ENCODE measurements at regions of chr19 and their contacts with region 1.

Region 1: DNA sequence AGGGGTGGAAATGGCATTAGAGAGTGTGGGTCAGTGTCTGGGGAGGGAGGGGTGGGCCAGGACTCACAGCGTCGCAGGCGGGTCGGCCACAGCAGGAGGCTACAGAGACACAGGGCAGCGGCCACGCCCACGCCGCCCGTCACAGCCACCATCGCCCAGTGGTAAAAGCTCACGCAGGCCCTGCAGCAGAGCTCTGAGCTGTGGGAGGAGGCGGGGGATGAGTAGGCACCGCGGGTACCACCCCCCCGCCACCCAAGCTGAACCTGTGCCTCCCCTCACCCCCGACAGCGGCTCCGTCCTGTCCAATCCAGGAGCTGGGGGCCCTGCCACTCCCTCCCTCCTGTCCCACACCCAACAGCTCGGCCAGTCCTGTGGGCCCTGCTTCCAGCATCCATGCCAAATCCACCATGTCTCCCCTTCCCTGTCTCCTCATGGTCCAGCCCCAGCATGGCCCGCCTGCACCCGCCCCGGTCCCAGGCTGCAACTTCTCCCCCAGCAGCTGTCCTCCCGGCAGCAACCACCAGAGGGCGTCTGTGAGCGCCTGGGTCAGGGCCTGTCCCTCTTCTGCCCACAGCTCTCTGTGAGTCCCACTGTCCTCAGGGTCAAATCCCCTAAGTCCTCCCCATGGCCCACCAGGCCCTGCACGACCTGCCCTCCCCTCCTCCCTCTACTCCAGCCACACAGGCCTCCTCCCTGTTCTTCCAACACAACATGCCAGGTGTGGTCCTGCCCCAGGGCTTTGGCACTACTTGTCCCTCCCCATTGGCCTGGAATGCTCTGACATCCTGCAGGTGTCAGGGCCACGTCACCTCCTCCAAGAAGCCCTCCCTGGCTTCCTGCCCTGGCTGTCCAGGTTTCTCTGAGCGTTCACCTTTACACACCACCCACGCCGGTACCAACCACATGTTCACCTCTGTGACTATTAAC is 6.0 kb downstream of the TEKTIP1 start:
- DNase-seq: peak; percentile 64 to 88 (median 77)
- ATAC-seq: peak; percentile 74
- H3K4me3 ChIP-seq: no peak overlapping the region
- H3K4me3 Mint-ChIP-seq: no peak overlapping the region
- H3K27ac ChIP-seq: no peak overlapping the region
- H3K27ac Mint-ChIP-seq: peak overlapping the region; percentile 33
- H3K4me1 ChIP-seq: peaks cover 21% of the 10 kb centered on the region
- H3K4me1 Mint-ChIP-seq: peaks cover 11% of the 10 kb centered on the region
- H3K27me3 ChIP-seq: no peaks in the 10 kb centered on the region
- H3K27me3 Mint-ChIP-seq: no peaks in the 10 kb centered on the region
- CTCF ChIP-seq: peak; percentile 94

Region 2: DNA sequence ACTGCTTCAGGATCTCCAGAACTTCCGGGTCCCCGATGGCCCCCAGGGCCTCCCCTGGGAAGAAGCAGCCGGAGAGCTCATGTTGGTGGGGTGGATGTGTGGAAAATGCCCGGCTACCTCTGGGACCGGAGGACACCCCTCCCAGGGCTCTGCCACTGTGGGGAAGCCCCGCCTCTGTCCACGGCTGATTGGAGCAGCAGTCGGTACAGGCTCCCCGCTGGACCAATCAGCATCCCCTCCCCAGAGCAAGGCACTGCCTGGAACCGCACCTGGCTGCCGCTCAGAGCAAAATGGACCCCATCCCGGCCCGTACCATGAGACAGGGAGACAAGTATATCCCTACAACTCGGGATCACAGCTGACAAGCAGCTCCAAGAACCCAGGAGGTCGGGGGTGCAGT is 51.0 kb before region 1 on chr19:
- CTCF ChIA-PET with region 1: no interaction called
- POLR2A ChIA-PET with region 1: no interaction called
- intact Hi-C with region 1: no loop called
- DNase-seq: peak in 5 of 14 experiments; percentile 20 to 62 (median 31)
- ATAC-seq: peak; percentile 78
- H3K4me3 ChIP-seq: no peak overlapping the region
- H3K4me3 Mint-ChIP-seq: no peak overlapping the region
- H3K27ac ChIP-seq: no peak overlapping the region
- H3K27ac Mint-ChIP-seq: no peak overlapping the region
- H3K4me1 ChIP-seq: peaks cover 18% of the 10 kb centered on the region
- H3K4me1 Mint-ChIP-seq: peaks cover 17% of the 10 kb centered on the region
- H3K27me3 ChIP-seq: no peaks in the 10 kb centered on the region
- H3K27me3 Mint-ChIP-seq: no peaks in the 10 kb centered on the region
- CTCF ChIP-seq: no peak

Region 3: GRCh38 chr19:3505598-3506383 is 39.2 kb before region 1 on chr19 and contains the start of gene FZR1:
- CTCF ChIA-PET with region 1: interaction called, 3 read pairs
- POLR2A ChIA-PET with region 1: interaction called, 3 read pairs
- intact Hi-C with region 1: loop called in 1 of 2 experiments (anchors 5 kb)
- DNase-seq: peak; percentile 98 to 100 (median 100)
- ATAC-seq: peak; percentile 85
- H3K4me3 ChIP-seq: peak within 1 kb of the TSS; percentile 91
- H3K4me3 Mint-ChIP-seq: peak within 1 kb of the TSS; percentile 95
- H3K27ac ChIP-seq: peak within 1 kb of the TSS; percentile 85 to 96
- H3K27ac Mint-ChIP-seq: peak within 1 kb of the TSS; percentile 95
- H3K4me1 ChIP-seq: peaks cover 53% of the 10 kb centered on the region
- H3K4me1 Mint-ChIP-seq: peaks cover 48% of the 10 kb centered on the region
- H3K27me3 ChIP-seq: no peaks in the 10 kb centered on the region
- H3K27me3 Mint-ChIP-seq: no peaks in the 10 kb centered on the region
- CTCF ChIP-seq: no peak
- total RNA-seq, gene FZR1: 109 to 116 TPM

Region 4: GRCh38 chr19:3557461-3558248 is 12.7 kb after region 1 on chr19 and contains the start of gene MFSD12:
- CTCF ChIA-PET with region 1: interaction called, 33 read pairs
- POLR2A ChIA-PET with region 1: interaction called, 21 read pairs
- intact Hi-C with region 1: no loop called
- DNase-seq: peak; percentile 87 to 97 (median 94)
- ATAC-seq: peak; percentile 77
- H3K4me3 ChIP-seq: peak within 1 kb of the TSS; percentile 84
- H3K4me3 Mint-ChIP-seq: peak within 1 kb of the TSS; percentile 93
- H3K27ac ChIP-seq: peak within 1 kb of the TSS; percentile 45 to 71
- H3K27ac Mint-ChIP-seq: peak within 1 kb of the TSS; percentile 93
- H3K4me1 ChIP-seq: peaks cover 54% of the 10 kb centered on the region
- H3K4me1 Mint-ChIP-seq: peaks cover 33% of the 10 kb centered on the region
- H3K27me3 ChIP-seq: no peaks in the 10 kb centered on the region
- H3K27me3 Mint-ChIP-seq: no peaks in the 10 kb centered on the region
- CTCF ChIP-seq: no peak
- total RNA-seq, gene MFSD12: 62.5 to 65.0 TPM

Region 5: GRCh38 chr19:3586124-3586626 is 41.2 kb after region 1 on chr19:
- CTCF ChIA-PET with region 1: interaction called, 6 read pairs
- POLR2A ChIA-PET with region 1: no interaction called
- intact Hi-C with region 1: loop called in 1 of 2 experiments (anchors 5 kb)
- DNase-seq: peak in 12 of 14 experiments; percentile 24 to 72 (median 42)
- ATAC-seq: peak; percentile 51
- H3K4me3 ChIP-seq: peak overlapping the region; percentile 54
- H3K4me3 Mint-ChIP-seq: peak overlapping the region; percentile 60
- H3K27ac ChIP-seq: no peak overlapping the region
- H3K27ac Mint-ChIP-seq: no peak overlapping the region
- H3K4me1 ChIP-seq: peaks cover 11% of the 10 kb centered on the region
- H3K4me1 Mint-ChIP-seq: no peaks in the 10 kb centered on the region
- H3K27me3 ChIP-seq: no peaks in the 10 kb centered on the region
- H3K27me3 Mint-ChIP-seq: no peaks in the 10 kb centered on the region
- CTCF ChIP-seq: peak; percentile 79

Region 6: GRCh38 chr19:3606690-3607289 is 61.8 kb after region 1 on chr19 and contains the start of gene TBXA2R:
- CTCF ChIA-PET with region 1: no interaction called
- POLR2A ChIA-PET with region 1: no interaction called
- intact Hi-C with region 1: loop called in 1 of 2 experiments (anchors 1 kb)
- DNase-seq: peak in 12 of 14 experiments; percentile 28 to 72 (median 47)
- ATAC-seq: peak; percentile 31
- H3K4me3 ChIP-seq: peak within 1 kb of the TSS; percentile 49
- H3K4me3 Mint-ChIP-seq: peak within 1 kb of the TSS; percentile 73
- H3K27ac ChIP-seq: no peak within 1 kb of the TSS
- H3K27ac Mint-ChIP-seq: no peak within 1 kb of the TSS
- H3K4me1 ChIP-seq: peaks cover 40% of the 10 kb centered on the region
- H3K4me1 Mint-ChIP-seq: peaks cover 14% of the 10 kb centered on the region
- H3K27me3 ChIP-seq: peaks cover 0 to 3% of the 10 kb centered on the region in 2 experiments
- H3K27me3 Mint-ChIP-seq: no peaks in the 10 kb centered on the region
- CTCF ChIP-seq: no peak
- total RNA-seq, gene TBXA2R: 0.47 to 0.75 TPM

Region 7: DNA sequence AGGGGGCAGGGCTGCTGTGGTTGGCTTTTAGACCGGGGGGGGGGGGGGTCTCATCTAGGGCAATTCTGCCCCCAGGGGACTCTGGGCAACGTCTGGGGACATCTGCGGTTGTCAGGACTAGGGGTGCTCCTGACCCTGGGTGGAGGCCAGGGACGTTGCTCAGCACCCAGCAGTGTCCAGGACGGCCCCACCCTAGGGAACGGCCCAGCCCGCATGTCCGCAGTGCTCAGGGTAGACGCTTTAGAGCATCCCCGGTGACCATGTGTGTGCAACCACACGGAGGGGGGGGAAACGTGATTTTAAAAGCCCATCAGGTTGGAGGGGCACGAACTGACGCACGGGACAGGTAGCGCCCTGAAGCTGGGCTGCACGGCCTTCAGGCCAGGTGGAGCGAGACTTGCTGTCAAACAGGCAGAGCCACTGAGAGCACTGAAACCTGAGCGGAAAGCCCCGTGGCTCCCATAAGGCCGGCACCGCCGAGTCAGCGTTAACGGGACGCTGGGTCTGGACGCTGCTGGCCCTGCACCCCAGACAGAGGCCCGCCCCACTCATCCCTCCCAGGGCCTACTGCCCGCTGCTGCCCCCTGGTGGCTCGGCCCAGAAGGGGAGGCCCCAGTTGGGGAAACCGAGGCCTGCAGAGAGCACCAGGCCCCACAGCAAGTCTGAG is 73.3 kb after region 1 on chr19:
- CTCF ChIA-PET with region 1: interaction called, 3 read pairs
- POLR2A ChIA-PET with region 1: no interaction called
- intact Hi-C with region 1: loop called (anchors 1 to 2 kb)
- DNase-seq: peak in 13 of 14 experiments; percentile 25 to 69 (median 44)
- ATAC-seq: peak; percentile 50
- H3K4me3 ChIP-seq: no peak overlapping the region
- H3K4me3 Mint-ChIP-seq: no peak overlapping the region
- H3K27ac ChIP-seq: no peak overlapping the region
- H3K27ac Mint-ChIP-seq: no peak overlapping the region
- H3K4me1 ChIP-seq: peaks cover 15% of the 10 kb centered on the region
- H3K4me1 Mint-ChIP-seq: peaks cover 7% of the 10 kb centered on the region
- H3K27me3 ChIP-seq: no peaks in the 10 kb centered on the region
- H3K27me3 Mint-ChIP-seq: no peaks in the 10 kb centered on the region
- CTCF ChIP-seq: peak; percentile 82

Region 8: GRCh38 chr19:3710265-3710812 is 165.3 kb after region 1 on chr19:
- CTCF ChIA-PET with region 1: no interaction called
- POLR2A ChIA-PET with region 1: no interaction called
- intact Hi-C with region 1: loop called in 1 of 2 experiments (anchors 2 kb)
- DNase-seq: peak in 2 of 14 experiments; percentile 67 to 77
- ATAC-seq: no peak
- H3K4me3 ChIP-seq: no peak overlapping the region
- H3K4me3 Mint-ChIP-seq: no peak overlapping the region
- H3K27ac ChIP-seq: no peak overlapping the region
- H3K27ac Mint-ChIP-seq: no peak overlapping the region
- H3K4me1 ChIP-seq: peaks cover 8% of the 10 kb centered on the region
- H3K4me1 Mint-ChIP-seq: peaks cover 6% of the 10 kb centered on the region
- H3K27me3 ChIP-seq: peaks cover 0 to 10% of the 10 kb centered on the region in 2 experiments
- H3K27me3 Mint-ChIP-seq: peaks cover 7% of the 10 kb centered on the region
- CTCF ChIP-seq: no peak